Activated CD8-positive, alpha-beta T cell treated with anti-CD3 and anti-CD28 coated beads, Interleukin-2, amount 10 ng/mL, durations not matched to agents 7 days and 5 days (primary cell): ENCODE measurements at regions of chr16 and their contacts with region 1.

Region 1: GRCh38 chr16:66608241-66609138 is 4.0 kb downstream of the CMTM3 start:
- DNase-seq: peak; percentile 85
- ATAC-seq: peak; percentile 27
- H3K4me3 Mint-ChIP-seq: no peak overlapping the region
- H3K27ac Mint-ChIP-seq: peak overlapping the region; percentile 79
- H3K4me1 Mint-ChIP-seq: peaks cover 37% of the 10 kb centered on the region
- H3K27me3 Mint-ChIP-seq: no peaks in the 10 kb centered on the region

Region 2: GRCh38 chr16:66406534-66407221 is 201.8 kb before region 1 on chr16:
- CTCF ChIA-PET with region 1: interaction called, 36 read pairs
- POLR2A ChIA-PET with region 1: no interaction called
- DNase-seq: peak; percentile 93
- ATAC-seq: peak; percentile 94
- H3K4me3 Mint-ChIP-seq: peak overlapping the region; percentile 77
- H3K27ac Mint-ChIP-seq: peak overlapping the region; percentile 60
- H3K4me1 Mint-ChIP-seq: peaks cover 27% of the 10 kb centered on the region
- H3K27me3 Mint-ChIP-seq: peaks cover 18% of the 10 kb centered on the region

Region 3: GRCh38 chr16:66552286-66553177 is 56.0 kb before region 1 on chr16 and contains the start of gene CKLF:
- CTCF ChIA-PET with region 1: interaction called, 15 read pairs
- POLR2A ChIA-PET with region 1: interaction called, 16 read pairs
- DNase-seq: peak; percentile 93
- ATAC-seq: peak; percentile 80
- H3K4me3 Mint-ChIP-seq: peak within 1 kb of the TSS; percentile 90
- H3K27ac Mint-ChIP-seq: peak within 1 kb of the TSS; percentile 92
- H3K4me1 Mint-ChIP-seq: peaks cover 75% of the 10 kb centered on the region
- H3K27me3 Mint-ChIP-seq: no peaks in the 10 kb centered on the region
- total RNA-seq, gene CKLF: 137 to 139 TPM

Region 4: GRCh38 chr16:66580605-66581209 is 27.8 kb before region 1 on chr16:
- CTCF ChIA-PET with region 1: interaction called, 11 read pairs
- POLR2A ChIA-PET with region 1: no interaction called
- DNase-seq: no peak
- ATAC-seq: no peak
- H3K4me3 Mint-ChIP-seq: no peak overlapping the region
- H3K27ac Mint-ChIP-seq: no peak overlapping the region
- H3K4me1 Mint-ChIP-seq: peaks cover 18% of the 10 kb centered on the region
- H3K27me3 Mint-ChIP-seq: peaks cover 34% of the 10 kb centered on the region

Region 5: GRCh38 chr16:66596986-66597848 is 11.3 kb before region 1 on chr16:
- CTCF ChIA-PET with region 1: interaction called, 24 read pairs
- POLR2A ChIA-PET with region 1: interaction called, 5 read pairs
- DNase-seq: peak; percentile 57
- ATAC-seq: peak; percentile 45
- H3K4me3 Mint-ChIP-seq: peak overlapping the region; percentile 61
- H3K27ac Mint-ChIP-seq: peak overlapping the region; percentile 92
- H3K4me1 Mint-ChIP-seq: peaks cover 51% of the 10 kb centered on the region
- H3K27me3 Mint-ChIP-seq: no peaks in the 10 kb centered on the region

Region 6: GRCh38 chr16:66650707-66651473 is 42.4 kb after region 1 on chr16:
- CTCF ChIA-PET with region 1: interaction called, 29 read pairs
- POLR2A ChIA-PET with region 1: interaction called, 8 read pairs
- DNase-seq: peak; percentile 91
- ATAC-seq: peak; percentile 99
- H3K4me3 Mint-ChIP-seq: peak overlapping the region; percentile 10
- H3K27ac Mint-ChIP-seq: no peak overlapping the region
- H3K4me1 Mint-ChIP-seq: peaks cover 16% of the 10 kb centered on the region
- H3K27me3 Mint-ChIP-seq: peaks cover 7% of the 10 kb centered on the region